Calu3 (cell line): ENCODE measurements at regions of chr16 and their contacts with region 1.

Region 1: DNA sequence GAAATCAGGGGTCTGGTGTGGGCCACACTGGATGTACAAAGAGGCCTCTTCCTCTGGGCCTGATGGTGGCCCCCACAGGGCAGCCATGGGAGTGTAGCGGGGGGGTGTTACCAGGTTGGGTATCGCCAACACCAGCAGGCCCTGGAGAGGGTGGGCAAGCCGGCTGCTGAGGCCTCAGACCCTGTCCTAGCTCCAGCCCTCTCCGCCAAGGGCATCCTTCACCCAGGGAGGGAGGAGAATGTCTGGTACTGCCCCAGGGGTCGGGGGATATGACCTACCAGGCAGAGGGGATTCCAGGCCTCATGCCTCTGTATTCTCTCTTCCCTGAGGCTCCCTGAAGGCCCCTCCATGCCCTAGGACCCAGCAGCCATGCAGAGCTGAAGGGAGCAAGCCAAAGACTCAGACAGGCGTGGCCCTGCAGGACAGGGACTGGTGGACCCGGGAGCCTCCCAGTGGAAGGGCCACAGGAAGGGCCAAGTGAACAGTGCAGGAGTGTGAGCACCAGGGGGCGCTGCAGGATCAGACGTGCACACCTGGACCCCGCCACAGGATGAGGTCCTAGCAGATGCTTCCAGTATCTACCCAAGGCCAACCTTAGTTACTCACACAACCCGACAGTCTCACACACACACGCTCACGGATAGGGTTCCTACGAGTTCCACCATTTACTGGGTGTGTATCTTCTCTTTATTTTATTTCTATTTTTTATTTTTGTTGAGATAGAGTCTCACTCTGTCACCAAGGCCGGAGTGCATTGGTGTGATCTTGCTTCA is 10.9 kb upstream of the CES4A start:
- DNase-seq: peak; percentile 94
- H3K4me3 Mint-ChIP-seq: no peak overlapping the region
- H3K27ac Mint-ChIP-seq: no peak overlapping the region
- H3K4me1 Mint-ChIP-seq: no peaks in the 10 kb centered on the region
- H3K27me3 Mint-ChIP-seq: peaks cover 32% of the 10 kb centered on the region
- CTCF ChIP-seq: peak; percentile 95

Region 2: DNA sequence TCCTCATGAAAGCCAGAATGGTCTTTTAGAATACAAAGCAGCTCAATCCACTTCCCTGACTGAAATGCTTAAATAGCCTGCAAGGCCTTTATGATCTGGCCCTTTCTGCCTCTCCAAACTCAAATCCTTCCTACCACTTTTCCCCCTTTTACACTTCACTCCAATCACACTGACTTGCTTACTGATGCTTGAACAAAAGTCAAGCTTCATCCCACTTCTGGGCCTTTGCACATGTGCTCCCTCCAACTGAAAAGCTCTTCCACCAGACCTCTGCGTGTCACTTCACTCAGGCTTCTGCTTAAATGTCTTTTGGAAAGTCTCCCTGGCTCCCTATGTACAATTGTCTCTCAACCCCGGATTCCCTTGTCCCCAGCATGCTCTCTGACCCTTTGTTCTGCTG is 162.8 kb before region 1 on chr16:
- CTCF ChIA-PET with region 1: no interaction called
- intact Hi-C with region 1: no loop called
- DNase-seq: no peak
- H3K4me3 Mint-ChIP-seq: no peak overlapping the region
- H3K27ac Mint-ChIP-seq: no peak overlapping the region
- H3K4me1 Mint-ChIP-seq: no peaks in the 10 kb centered on the region
- H3K27me3 Mint-ChIP-seq: no peaks in the 10 kb centered on the region
- CTCF ChIP-seq: no peak

Region 3: DNA sequence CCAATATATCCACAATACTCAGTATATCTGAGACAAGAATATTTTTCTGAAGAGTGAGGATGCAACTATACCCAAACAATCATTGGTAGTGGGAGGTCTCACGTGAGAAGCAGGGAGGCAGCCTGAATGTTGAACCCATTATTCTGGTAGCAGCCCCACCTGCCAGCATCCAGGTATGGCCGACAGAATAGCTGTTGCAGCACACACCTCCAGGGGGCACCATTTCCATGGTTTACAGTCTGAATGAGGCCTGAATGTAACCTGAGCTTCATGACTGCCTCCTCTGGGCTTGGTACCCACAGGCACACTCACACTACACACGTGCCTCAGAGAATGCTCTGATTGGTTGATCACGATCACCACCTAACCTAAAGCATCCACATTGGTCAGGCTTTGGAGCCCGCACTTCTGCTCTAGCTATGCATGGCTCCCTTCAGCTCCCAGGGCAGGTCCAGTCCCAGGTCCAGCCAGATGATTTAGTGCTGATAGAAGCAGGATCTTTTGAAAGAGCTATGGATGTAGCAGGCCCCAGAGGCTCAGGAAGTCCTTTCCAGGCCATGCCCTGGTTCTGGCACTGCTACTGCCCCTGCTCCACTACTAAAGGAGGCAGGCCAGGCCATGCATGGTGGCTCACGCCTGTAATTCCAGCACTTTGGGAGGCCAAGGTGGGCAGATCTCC is 40.4 kb after region 1 on chr16:
- CTCF ChIA-PET with region 1: interaction called, 3 read pairs
- intact Hi-C with region 1: loop called (anchors 5 kb)
- DNase-seq: peak; percentile 92
- H3K4me3 Mint-ChIP-seq: no peak overlapping the region
- H3K27ac Mint-ChIP-seq: no peak overlapping the region
- H3K4me1 Mint-ChIP-seq: peaks cover 25% of the 10 kb centered on the region
- H3K27me3 Mint-ChIP-seq: peaks cover 22% of the 10 kb centered on the region
- CTCF ChIP-seq: peak; percentile 79

Region 4: DNA sequence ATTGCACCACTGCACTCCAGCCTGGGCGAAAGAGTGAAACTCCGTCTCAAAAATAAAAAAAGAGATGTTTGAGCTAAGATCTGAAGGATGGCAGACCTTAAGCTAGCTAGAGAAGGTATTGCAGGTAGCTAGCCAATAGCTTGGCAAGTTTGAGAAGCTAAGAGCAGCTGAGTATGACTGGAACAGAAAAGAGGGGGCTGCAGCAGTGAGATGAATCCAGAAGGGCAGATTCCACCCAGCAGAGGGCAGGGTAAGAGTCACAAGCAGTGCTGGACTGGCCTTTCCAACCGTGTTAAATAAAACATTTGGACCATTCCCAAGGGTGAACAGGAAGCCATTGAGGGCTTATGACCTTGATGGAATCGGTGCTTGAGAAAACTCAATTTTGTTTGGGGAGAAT is 126.5 kb after region 1 on chr16:
- CTCF ChIA-PET with region 1: no interaction called
- intact Hi-C with region 1: loop called (anchors 2 kb)
- DNase-seq: peak; percentile 39
- H3K4me3 Mint-ChIP-seq: no peak overlapping the region
- H3K27ac Mint-ChIP-seq: peak overlapping the region; percentile 15
- H3K4me1 Mint-ChIP-seq: no peaks in the 10 kb centered on the region
- H3K27me3 Mint-ChIP-seq: no peaks in the 10 kb centered on the region
- CTCF ChIP-seq: no peak

Region 5: DNA sequence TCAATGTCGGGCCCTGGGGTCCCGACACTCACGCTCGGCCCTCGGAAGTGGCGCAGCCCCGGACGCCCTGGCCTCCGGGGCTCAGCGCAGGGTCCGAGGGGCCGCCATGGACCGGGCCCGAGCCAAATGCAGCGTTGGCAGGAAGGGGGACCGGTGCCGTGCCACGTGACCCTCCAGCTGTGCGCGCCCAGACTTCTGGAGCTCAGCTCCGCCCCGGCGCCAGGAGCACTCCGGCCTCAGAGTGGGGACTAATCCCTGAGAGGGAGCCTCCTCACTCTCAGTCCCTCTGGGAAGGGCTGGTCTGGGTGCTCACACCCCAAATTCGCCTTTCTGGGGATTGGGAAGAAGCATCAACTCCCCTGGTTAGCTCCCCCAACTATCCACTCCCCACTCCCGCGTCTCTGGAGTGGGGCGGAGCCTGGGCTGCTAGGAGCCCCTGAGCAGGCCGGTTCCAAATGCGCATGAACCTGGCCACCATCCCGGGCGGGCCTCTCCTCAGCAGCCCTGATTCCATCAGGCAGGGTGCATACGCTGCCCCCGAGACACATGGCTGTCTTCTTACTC is 173.4 kb after region 1 on chr16 and contains the start of gene B3GNT9:
- CTCF ChIA-PET with region 1: no interaction called
- intact Hi-C with region 1: loop called (anchors 5 kb)
- DNase-seq: peak; percentile 54
- H3K4me3 Mint-ChIP-seq: peak within 1 kb of the TSS; percentile 71
- H3K27ac Mint-ChIP-seq: no peak within 1 kb of the TSS
- H3K4me1 Mint-ChIP-seq: peaks cover 4% of the 10 kb centered on the region
- H3K27me3 Mint-ChIP-seq: no peaks in the 10 kb centered on the region
- CTCF ChIP-seq: no peak
- total RNA-seq, gene B3GNT9: 6.8 and 8.0 TPM in 2 replicates

Region 6: DNA sequence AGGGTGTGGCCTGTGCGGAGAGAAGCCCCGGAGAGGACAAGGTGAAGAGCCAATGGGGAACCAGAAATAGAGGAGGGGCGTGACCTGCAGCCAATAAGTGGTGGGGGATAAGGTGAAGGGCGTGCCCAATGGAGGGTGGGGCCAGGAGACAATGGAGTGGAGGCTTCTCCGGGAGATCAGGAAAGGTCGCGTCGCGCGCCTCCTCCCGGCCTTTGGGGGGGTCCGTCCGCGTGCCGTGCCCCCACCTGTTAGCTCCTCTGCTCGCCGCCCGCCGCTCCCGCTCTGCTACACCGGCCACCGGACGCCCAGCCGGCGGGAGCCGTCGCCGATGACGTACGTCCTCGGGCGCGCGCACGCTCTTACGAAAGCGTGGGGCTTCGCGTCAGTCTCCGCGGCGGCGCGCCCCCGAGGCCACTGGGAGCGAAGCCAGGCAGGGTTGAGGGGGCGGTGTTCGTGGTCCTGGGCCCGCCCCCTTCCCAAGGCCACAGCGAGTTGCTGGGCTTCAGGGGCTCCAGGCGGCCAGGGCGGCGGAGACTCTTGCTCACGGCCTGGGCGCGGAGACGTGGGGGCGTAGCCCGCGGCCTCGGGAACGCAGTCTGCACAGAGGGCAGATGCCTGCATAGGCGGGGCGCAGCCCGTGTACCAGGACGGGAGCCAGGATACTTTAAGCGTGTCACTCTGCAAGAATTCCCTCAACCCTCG is 206.3 kb after region 1 on chr16 and contains the start of gene MATCAP1:
- CTCF ChIA-PET with region 1: interaction called, 3 read pairs
- intact Hi-C with region 1: loop called (anchors 1 kb)
- DNase-seq: peak; percentile 97
- H3K4me3 Mint-ChIP-seq: no peak within 1 kb of the TSS
- H3K27ac Mint-ChIP-seq: no peak within 1 kb of the TSS
- H3K4me1 Mint-ChIP-seq: peaks cover 15% of the 10 kb centered on the region
- H3K27me3 Mint-ChIP-seq: peaks cover 12% of the 10 kb centered on the region
- CTCF ChIP-seq: no peak
- total RNA-seq, gene MATCAP1: 33.1 and 36.5 TPM in 2 replicates

Region 7: DNA sequence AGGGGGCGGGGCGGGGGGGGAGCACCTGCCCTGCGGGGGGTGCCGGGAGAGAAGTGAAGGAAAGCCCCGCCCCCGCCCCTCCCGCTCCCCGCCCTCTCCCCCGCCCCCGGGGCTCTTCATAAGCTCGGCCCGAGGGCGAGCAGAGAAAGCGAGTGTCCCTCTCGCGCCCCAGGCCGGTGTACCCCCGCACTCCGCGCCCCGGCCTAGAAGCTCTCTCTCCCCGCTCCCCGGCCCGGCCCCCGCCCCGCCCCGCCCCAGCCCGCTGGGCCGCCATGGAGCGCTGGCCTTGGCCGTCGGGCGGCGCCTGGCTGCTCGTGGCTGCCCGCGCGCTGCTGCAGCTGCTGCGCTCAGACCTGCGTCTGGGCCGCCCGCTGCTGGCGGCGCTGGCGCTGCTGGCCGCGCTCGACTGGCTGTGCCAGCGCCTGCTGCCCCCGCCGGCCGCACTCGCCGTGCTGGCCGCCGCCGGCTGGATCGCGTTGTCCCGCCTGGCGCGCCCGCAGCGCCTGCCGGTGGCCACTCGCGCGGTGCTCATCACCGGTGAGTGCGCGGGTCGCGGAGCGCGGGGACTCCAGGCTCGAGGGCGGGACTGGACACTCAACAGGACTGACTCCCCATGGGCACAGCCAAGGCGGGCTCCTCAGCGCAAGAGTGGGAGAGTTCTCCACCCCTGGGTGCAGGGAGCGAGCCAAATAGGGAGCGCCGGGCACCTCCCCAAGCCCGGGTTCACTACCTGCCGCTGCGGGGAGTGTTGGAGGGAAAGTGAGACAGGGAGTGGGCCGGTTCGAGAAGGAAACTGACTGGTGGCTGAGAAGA is 453.7 kb after region 1 on chr16 and contains the start of gene HSD11B2:
- CTCF ChIA-PET with region 1: no interaction called
- intact Hi-C with region 1: no loop called
- DNase-seq: peak; percentile 79
- H3K4me3 Mint-ChIP-seq: peak within 1 kb of the TSS; percentile 96
- H3K27ac Mint-ChIP-seq: peak within 1 kb of the TSS; percentile 84
- H3K4me1 Mint-ChIP-seq: peaks cover 29% of the 10 kb centered on the region
- H3K27me3 Mint-ChIP-seq: peaks cover 25% of the 10 kb centered on the region
- CTCF ChIP-seq: peak; percentile 11
- total RNA-seq, gene HSD11B2: 10.2 and 10.8 TPM in 2 replicates